ENCODE measurements at regions of chr18 and their contacts with region 1.

Region 1: DNA sequence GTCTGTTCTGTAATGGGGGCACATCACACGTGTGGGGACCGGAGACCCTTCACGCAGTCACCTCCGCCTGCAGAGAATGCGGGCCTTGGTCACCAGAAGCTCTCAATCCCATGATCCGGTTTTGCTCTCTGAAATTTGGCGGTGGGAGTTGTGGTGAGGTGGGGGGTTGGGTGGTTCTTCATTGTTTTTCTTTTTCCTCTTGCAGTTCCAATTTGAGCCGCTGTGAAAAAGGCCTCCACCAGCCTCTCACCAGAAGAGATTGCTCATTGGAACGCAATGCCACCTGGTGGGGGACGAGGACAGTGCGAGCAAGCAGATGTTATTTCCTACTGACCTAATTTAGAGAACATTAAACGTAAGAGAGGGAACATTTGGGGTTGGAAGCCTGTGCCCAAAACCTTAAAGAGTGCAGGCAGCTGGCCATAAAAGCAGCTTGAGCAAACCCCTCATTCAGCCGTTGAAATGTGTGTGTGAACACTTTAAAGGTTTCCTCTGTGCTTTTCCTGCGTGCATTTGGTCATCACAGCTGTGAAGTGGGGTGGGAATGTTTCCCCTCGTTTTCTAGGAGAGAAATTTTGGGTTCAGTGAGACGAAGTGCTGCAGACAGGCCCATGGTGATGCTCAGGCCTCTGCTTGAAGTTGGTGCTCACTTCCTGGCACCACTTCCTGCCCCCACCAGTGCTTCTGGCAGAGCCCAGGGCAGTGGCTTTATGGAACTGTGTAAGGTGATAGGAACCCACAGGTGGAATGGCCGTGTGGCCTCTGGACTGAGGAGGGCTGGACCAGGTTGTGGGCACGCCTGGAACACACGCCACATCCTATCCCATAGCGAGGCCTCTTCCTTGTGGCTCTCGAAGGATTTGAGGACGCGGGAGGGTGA is 61.7 kb downstream of the ZCCHC2 start:
- DNase-seq: peak; percentile 76 to 98 (median 86)

Region 2: GRCh38 chr18:62186774-62187542 is 397.5 kb before region 1 on chr18 and contains the starts of genes PIGN and RELCH:
- intact Hi-C with region 1: loop called (anchors 5 kb)
- DNase-seq: peak; percentile 91 to 99 (median 95)

Region 3: GRCh38 chr18:62425465-62426195 is 158.9 kb before region 1 on chr18:
- intact Hi-C with region 1: loop called (anchors 1 kb)
- DNase-seq: peak in 8 of 10 donors; percentile 44 to 93 (median 66)

Region 4: GRCh38 chr18:62982600-62983251 is 398.2 kb after region 1 on chr18:
- intact Hi-C with region 1: loop called (anchors 2 kb)
- DNase-seq: peak in 9 of 10 donors; percentile 42 to 91 (median 71)

Measured in posterior cingulate gyrus (tissue), 11 donors.